ENCODE measurements at regions of chr19 and their contacts with region 1.

Region 1: DNA sequence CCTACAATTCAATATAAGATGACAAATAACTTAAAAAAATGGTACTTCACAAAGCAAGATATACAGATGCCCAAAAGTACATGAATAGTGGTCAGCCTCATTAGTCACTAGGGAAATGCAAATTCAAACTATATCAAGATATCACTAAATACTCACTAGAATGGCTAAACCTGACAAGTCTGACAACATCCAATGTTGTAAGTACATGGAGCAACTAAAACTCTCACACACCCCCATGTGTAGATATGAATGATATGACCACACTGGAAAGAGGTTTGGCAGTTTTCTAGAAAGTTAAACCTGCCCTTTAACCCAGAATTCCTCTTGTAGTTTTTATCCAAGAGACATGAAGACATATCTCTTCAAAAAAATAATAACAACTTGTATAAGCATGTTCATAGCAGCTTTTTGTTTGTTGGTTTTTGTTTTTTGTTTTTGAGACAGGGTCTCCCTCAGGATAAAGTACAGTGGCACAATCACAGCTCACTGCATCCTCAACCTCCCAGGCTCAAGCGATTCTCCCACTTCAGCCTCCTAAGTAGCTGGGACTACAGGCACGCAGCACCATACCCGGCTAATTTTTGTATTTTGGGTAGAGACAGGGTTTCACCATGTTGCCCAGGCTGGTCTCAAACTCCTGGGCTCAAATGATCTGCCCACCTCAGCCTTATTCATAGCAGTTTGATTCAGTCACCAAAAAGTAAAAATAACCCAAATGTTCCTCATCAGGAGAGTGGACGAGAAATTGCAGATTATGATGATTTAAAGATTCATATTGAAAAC is 55.1 kb downstream of the RFX2 start:
- DNase-seq: no peak
- H3K4me3 ChIP-seq: no peak overlapping the region
- H3K4me3 Mint-ChIP-seq: no peak overlapping the region
- H3K27ac ChIP-seq: no peak overlapping the region
- H3K27ac Mint-ChIP-seq: peak overlapping the region in 2 of 8 donors; percentile 12 to 43
- H3K4me1 ChIP-seq: peaks cover 3% of the 10 kb centered on the region
- H3K4me1 Mint-ChIP-seq: peaks cover 3 to 7% (median 5%) of the 10 kb centered on the region in 3 donors
- H3K27me3 ChIP-seq: no peaks in the 10 kb centered on the region
- H3K27me3 Mint-ChIP-seq: peaks cover 0 to 6% of the 10 kb centered on the region in 2 donors

Region 2: DNA sequence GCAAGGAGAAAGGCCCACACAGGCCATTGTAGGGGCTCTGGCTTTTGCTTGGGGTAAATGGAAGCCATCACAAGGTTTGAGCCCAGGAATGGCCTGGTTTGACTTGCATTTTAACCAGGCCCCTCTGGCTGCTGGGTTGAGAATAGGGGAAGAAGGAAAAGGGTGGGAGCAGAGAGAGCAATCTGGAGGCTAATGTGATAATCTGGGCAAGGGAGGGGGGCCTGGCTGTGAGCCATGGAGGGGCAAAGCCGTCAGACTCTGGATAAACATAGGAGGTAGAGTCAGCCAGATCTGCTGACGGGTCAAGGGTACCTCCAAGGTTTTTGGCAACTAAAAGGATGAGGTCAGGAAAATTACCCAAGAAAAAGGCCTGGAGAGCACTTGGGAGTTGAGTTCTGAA is 13.5 kb after region 1 on chr19:
- CTCF ChIA-PET with region 1: no interaction called
- POLR2A ChIA-PET with region 1: interaction called, 12 read pairs
- DNase-seq: no peak
- H3K4me3 ChIP-seq: no peak overlapping the region
- H3K4me3 Mint-ChIP-seq: no peak overlapping the region
- H3K27ac ChIP-seq: no peak overlapping the region
- H3K27ac Mint-ChIP-seq: peak overlapping the region in 1 of 8 donors; percentile 32
- H3K4me1 ChIP-seq: peaks cover 8% of the 10 kb centered on the region
- H3K4me1 Mint-ChIP-seq: peaks cover 20 to 37% (median 30%) of the 10 kb centered on the region in 3 donors
- H3K27me3 ChIP-seq: no peaks in the 10 kb centered on the region
- H3K27me3 Mint-ChIP-seq: peaks cover 10 to 13% of the 10 kb centered on the region in 2 donors